ENCODE measurements at regions of chr20 and their contacts with region 1.

Region 1: DNA sequence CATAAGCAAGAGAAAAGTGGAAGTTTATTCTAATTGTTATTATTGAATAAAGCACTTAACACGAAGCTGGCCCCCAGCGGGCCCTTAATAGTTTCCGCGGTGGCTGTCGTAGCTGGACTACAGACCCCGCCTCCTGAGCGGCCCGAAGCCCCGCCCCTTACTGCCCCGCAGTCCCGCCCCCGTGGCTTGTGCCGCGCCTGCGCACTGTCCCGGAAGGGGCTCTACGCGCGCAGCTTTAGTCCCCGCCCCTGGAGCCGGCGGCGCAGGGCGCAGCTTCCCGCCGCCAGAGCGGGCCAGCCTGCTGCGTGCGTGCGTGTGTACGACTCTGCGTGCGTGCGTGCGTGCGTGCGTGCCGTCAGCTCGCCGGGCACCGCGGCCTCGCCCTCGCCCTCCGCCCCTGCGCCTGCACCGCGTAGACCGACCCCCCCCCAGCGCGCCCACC is at the start of gene VAPB:
- DNase-seq: peak; percentile 95
- H3K4me3 ChIP-seq: peak within 1 kb of the TSS; percentile 88
- H3K27ac ChIP-seq: peak within 1 kb of the TSS; percentile 83
- H3K4me1 ChIP-seq: peaks cover 21% of the 10 kb centered on the region
- H3K27me3 ChIP-seq: no peaks in the 10 kb centered on the region
- CTCF ChIP-seq: no peak
- total RNA-seq, gene VAPB: 57.4 to 63.5 TPM

Region 2: GRCh38 chr20:58048169-58048568 is 340.7 kb before region 1 on chr20:
- intact Hi-C with region 1: no loop called
- DNase-seq: no peak
- H3K4me3 ChIP-seq: no peak overlapping the region
- H3K27ac ChIP-seq: no peak overlapping the region
- H3K4me1 ChIP-seq: no peaks in the 10 kb centered on the region
- H3K27me3 ChIP-seq: no peaks in the 10 kb centered on the region
- CTCF ChIP-seq: no peak

Region 3: GRCh38 chr20:58309575-58310290 is 79.2 kb before region 1 on chr20 and contains the start of gene RAB22A:
- intact Hi-C with region 1: loop called (anchors 2 kb)
- DNase-seq: peak; percentile 76
- H3K4me3 ChIP-seq: peak within 1 kb of the TSS; percentile 100
- H3K27ac ChIP-seq: peak within 1 kb of the TSS; percentile 90
- H3K4me1 ChIP-seq: peaks cover 11% of the 10 kb centered on the region
- H3K27me3 ChIP-seq: no peaks in the 10 kb centered on the region
- CTCF ChIP-seq: no peak
- total RNA-seq, gene RAB22A: 17.5 to 22.0 TPM

Region 4: GRCh38 chr20:58447511-58448391 is 58.8 kb after region 1 on chr20:
- intact Hi-C with region 1: loop called (anchors 5 kb)
- DNase-seq: peak; percentile 53
- H3K4me3 ChIP-seq: no peak overlapping the region
- H3K27ac ChIP-seq: no peak overlapping the region
- H3K4me1 ChIP-seq: no peaks in the 10 kb centered on the region
- H3K27me3 ChIP-seq: no peaks in the 10 kb centered on the region
- CTCF ChIP-seq: peak; percentile 53

Region 5: GRCh38 chr20:58746620-58747019 is 357.7 kb after region 1 on chr20:
- intact Hi-C with region 1: no loop called
- DNase-seq: no peak
- H3K4me3 ChIP-seq: no peak overlapping the region
- H3K27ac ChIP-seq: no peak overlapping the region
- H3K4me1 ChIP-seq: no peaks in the 10 kb centered on the region
- H3K27me3 ChIP-seq: no peaks in the 10 kb centered on the region
- CTCF ChIP-seq: no peak